ENCODE measurements at regions of chr2 and their contacts with region 1.

Region 1: GRCh38 chr2:46776687-46777327 is 138.8 kb downstream of the MCFD2 start:
- DNase-seq: peak in 12 of 14 experiments; percentile 17 to 59 (median 32)
- ATAC-seq: no peak
- H3K4me3 ChIP-seq: no peak overlapping the region
- H3K4me3 Mint-ChIP-seq: no peak overlapping the region
- H3K27ac ChIP-seq: no peak overlapping the region
- H3K27ac Mint-ChIP-seq: no peak overlapping the region
- H3K4me1 ChIP-seq: no peaks in the 10 kb centered on the region
- H3K4me1 Mint-ChIP-seq: no peaks in the 10 kb centered on the region
- H3K27me3 ChIP-seq: peaks cover 0 to 5% of the 10 kb centered on the region in 2 experiments
- H3K27me3 Mint-ChIP-seq: peaks cover 5% of the 10 kb centered on the region
- CTCF ChIP-seq: peak; percentile 70

Region 2: GRCh38 chr2:45964226-45964845 is 812.5 kb before region 1 on chr2:
- CTCF ChIA-PET with region 1: no interaction called
- POLR2A ChIA-PET with region 1: no interaction called
- intact Hi-C with region 1: no loop called
- DNase-seq: no peak
- ATAC-seq: no peak
- H3K4me3 ChIP-seq: no peak overlapping the region
- H3K4me3 Mint-ChIP-seq: no peak overlapping the region
- H3K27ac ChIP-seq: no peak overlapping the region
- H3K27ac Mint-ChIP-seq: no peak overlapping the region
- H3K4me1 ChIP-seq: peaks cover 9% of the 10 kb centered on the region
- H3K4me1 Mint-ChIP-seq: peaks cover 14% of the 10 kb centered on the region
- H3K27me3 ChIP-seq: no peaks in the 10 kb centered on the region
- H3K27me3 Mint-ChIP-seq: no peaks in the 10 kb centered on the region
- CTCF ChIP-seq: no peak

Region 3: GRCh38 chr2:46632349-46632748 is 144.5 kb before region 1 on chr2:
- CTCF ChIA-PET with region 1: no interaction called
- POLR2A ChIA-PET with region 1: no interaction called
- intact Hi-C with region 1: loop called in 1 of 2 experiments (anchors 2 kb)
- DNase-seq: peak in 3 of 14 experiments; percentile 23 to 44 (median 41)
- ATAC-seq: no peak
- H3K4me3 ChIP-seq: no peak overlapping the region
- H3K4me3 Mint-ChIP-seq: no peak overlapping the region
- H3K27ac ChIP-seq: no peak overlapping the region
- H3K27ac Mint-ChIP-seq: no peak overlapping the region
- H3K4me1 ChIP-seq: peaks cover 3% of the 10 kb centered on the region
- H3K4me1 Mint-ChIP-seq: peaks cover 10% of the 10 kb centered on the region
- H3K27me3 ChIP-seq: no peaks in the 10 kb centered on the region
- H3K27me3 Mint-ChIP-seq: no peaks in the 10 kb centered on the region
- CTCF ChIP-seq: peak; percentile 30

Region 4: GRCh38 chr2:46657042-46657504 is 119.7 kb before region 1 on chr2:
- CTCF ChIA-PET with region 1: interaction called, 4 read pairs
- POLR2A ChIA-PET with region 1: no interaction called
- intact Hi-C with region 1: loop called (anchors 2 to 5 kb)
- DNase-seq: peak in 3 of 14 experiments; percentile 8 to 34 (median 32)
- ATAC-seq: peak; percentile 56
- H3K4me3 ChIP-seq: no peak overlapping the region
- H3K4me3 Mint-ChIP-seq: no peak overlapping the region
- H3K27ac ChIP-seq: no peak overlapping the region
- H3K27ac Mint-ChIP-seq: no peak overlapping the region
- H3K4me1 ChIP-seq: no peaks in the 10 kb centered on the region
- H3K4me1 Mint-ChIP-seq: no peaks in the 10 kb centered on the region
- H3K27me3 ChIP-seq: no peaks in the 10 kb centered on the region
- H3K27me3 Mint-ChIP-seq: no peaks in the 10 kb centered on the region
- CTCF ChIP-seq: peak; percentile 52

Region 5: GRCh38 chr2:46800218-46800964 is 23.6 kb after region 1 on chr2:
- CTCF ChIA-PET with region 1: no interaction called
- POLR2A ChIA-PET with region 1: no interaction called
- intact Hi-C with region 1: no loop called
- DNase-seq: no peak
- ATAC-seq: no peak
- H3K4me3 ChIP-seq: no peak overlapping the region
- H3K4me3 Mint-ChIP-seq: no peak overlapping the region
- H3K27ac ChIP-seq: no peak overlapping the region
- H3K27ac Mint-ChIP-seq: no peak overlapping the region
- H3K4me1 ChIP-seq: no peaks in the 10 kb centered on the region
- H3K4me1 Mint-ChIP-seq: no peaks in the 10 kb centered on the region
- H3K27me3 ChIP-seq: peaks cover 0 to 2% of the 10 kb centered on the region in 2 experiments
- H3K27me3 Mint-ChIP-seq: peaks cover 4% of the 10 kb centered on the region
- CTCF ChIP-seq: no peak

Region 6: GRCh38 chr2:47058003-47058931 is 281.5 kb after region 1 on chr2:
- CTCF ChIA-PET with region 1: no interaction called
- POLR2A ChIA-PET with region 1: no interaction called
- intact Hi-C with region 1: no loop called
- DNase-seq: peak in 1 of 14 experiments; percentile 43
- ATAC-seq: no peak
- H3K4me3 ChIP-seq: no peak overlapping the region
- H3K4me3 Mint-ChIP-seq: no peak overlapping the region
- H3K27ac ChIP-seq: peak overlapping the region in 1 of 2 donors; percentile 28
- H3K27ac Mint-ChIP-seq: peak overlapping the region; percentile 71
- H3K4me1 ChIP-seq: peaks cover 33% of the 10 kb centered on the region
- H3K4me1 Mint-ChIP-seq: peaks cover 35% of the 10 kb centered on the region
- H3K27me3 ChIP-seq: no peaks in the 10 kb centered on the region
- H3K27me3 Mint-ChIP-seq: no peaks in the 10 kb centered on the region
- CTCF ChIP-seq: no peak

Measured in CD4-positive, alpha-beta T cell (primary cell).